Mammary epithelial cell (primary cell): ENCODE measurements at regions of chr10 and their contacts with region 1.

Region 1: DNA sequence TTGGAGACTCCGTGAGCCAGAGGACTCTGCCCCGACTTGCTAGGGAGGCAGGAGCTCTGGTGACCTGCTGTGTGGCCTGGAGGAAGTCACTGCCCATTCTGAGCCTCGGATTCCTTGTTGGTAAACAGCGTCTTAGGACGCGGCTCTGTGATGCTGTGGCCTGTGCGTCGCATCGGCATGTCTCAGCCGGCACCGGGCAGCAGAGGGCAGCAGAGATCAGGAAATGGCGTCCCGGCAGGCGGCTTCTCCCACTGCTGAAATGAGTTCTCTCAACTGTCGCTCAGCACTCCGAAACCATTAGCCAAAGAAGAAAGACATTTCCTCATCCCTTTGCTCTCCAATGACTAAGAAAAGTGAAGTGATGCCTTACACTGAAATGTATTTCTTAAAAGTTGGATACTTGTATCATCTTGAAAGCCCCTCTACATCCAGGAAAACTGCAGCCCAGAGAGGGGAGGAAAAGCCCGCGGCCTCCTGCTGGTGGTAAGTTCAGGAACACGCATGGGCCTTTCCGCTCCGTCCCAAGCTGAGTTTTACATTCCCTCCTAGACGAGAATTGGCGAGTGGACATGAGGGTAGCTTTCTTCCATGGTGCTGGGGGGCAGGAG is 91.7 kb downstream of the WDR11 start:
- DNase-seq: peak; percentile 67
- H3K4me3 ChIP-seq: no peak overlapping the region
- H3K27ac ChIP-seq: no peak overlapping the region
- H3K4me1 ChIP-seq: peaks cover 15% of the 10 kb centered on the region
- H3K27me3 ChIP-seq: no peaks in the 10 kb centered on the region
- CTCF ChIP-seq: peak; percentile 80 to 92

Region 2: DNA sequence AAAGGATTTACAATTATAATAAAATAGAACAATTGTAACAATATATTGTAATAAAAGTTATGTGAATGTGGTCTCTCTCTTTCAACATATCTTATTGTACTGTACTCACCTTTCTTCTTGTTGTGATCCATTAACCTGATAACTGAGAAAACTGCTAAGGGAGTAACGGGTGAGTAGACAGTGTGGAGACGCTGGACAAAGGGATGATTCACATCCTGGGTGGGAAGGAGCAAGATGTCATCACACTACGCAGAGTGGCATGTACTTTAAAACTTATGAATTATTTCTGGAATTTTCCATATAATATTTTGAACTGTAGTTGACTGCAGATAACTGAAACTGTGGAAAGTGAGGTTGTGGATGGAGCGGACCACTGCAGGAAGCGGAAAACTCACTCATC is 577.0 kb before region 1 on chr10:
- CTCF ChIA-PET with region 1: no interaction called
- dilution Hi-C with region 1: no loop called
- in situ Hi-C with region 1: no loop called
- intact Hi-C with region 1: no loop called
- DNase-seq: peak; percentile 77
- H3K4me3 ChIP-seq: no peak overlapping the region
- H3K27ac ChIP-seq: no peak overlapping the region
- H3K4me1 ChIP-seq: peaks cover 12% of the 10 kb centered on the region
- H3K27me3 ChIP-seq: no peaks in the 10 kb centered on the region
- CTCF ChIP-seq: no peak

Region 3: GRCh38 chr10:120873734-120874133 is 69.2 kb before region 1 on chr10:
- CTCF ChIA-PET with region 1: no interaction called
- dilution Hi-C with region 1: no loop called
- in situ Hi-C with region 1: no loop called
- intact Hi-C with region 1: no loop called
- DNase-seq: no peak
- H3K4me3 ChIP-seq: no peak overlapping the region
- H3K27ac ChIP-seq: no peak overlapping the region
- H3K4me1 ChIP-seq: no peaks in the 10 kb centered on the region
- H3K27me3 ChIP-seq: no peaks in the 10 kb centered on the region
- CTCF ChIP-seq: no peak

Region 4: GRCh38 chr10:120999868-121000267 is 57.0 kb after region 1 on chr10:
- CTCF ChIA-PET with region 1: no interaction called
- dilution Hi-C with region 1: no loop called
- in situ Hi-C with region 1: no loop called
- intact Hi-C with region 1: loop called (anchors 5 kb)
- DNase-seq: no peak
- H3K4me3 ChIP-seq: no peak overlapping the region
- H3K27ac ChIP-seq: no peak overlapping the region
- H3K4me1 ChIP-seq: peaks cover 7% of the 10 kb centered on the region
- H3K27me3 ChIP-seq: peaks cover 7% of the 10 kb centered on the region
- CTCF ChIP-seq: peak; percentile 12 to 22

Region 5: DNA sequence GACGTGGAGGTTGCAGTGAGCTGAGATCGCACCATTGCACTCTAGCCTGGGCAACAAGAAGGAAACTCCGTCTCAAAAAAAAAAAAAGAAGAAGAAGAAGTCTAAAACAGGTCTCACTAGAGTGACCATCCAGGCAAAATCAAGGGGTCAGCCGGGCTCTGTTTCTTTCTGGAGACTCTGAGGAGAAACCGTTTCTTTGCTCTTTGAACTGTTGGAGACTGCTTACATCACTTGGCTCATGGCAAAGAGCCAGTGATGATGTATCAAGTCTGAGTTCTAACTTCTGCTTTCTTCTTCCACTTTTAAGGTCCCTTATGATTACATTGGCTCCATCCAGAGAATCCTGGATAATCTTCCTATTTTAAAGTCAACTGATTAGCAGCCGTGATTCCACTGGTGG is 215.1 kb after region 1 on chr10:
- CTCF ChIA-PET with region 1: no interaction called
- dilution Hi-C with region 1: no loop called
- in situ Hi-C with region 1: no loop called
- intact Hi-C with region 1: loop called (anchors 2 kb)
- DNase-seq: peak; percentile 54
- H3K4me3 ChIP-seq: no peak overlapping the region
- H3K27ac ChIP-seq: peak overlapping the region; percentile 100
- H3K4me1 ChIP-seq: peaks cover 49% of the 10 kb centered on the region
- H3K27me3 ChIP-seq: no peaks in the 10 kb centered on the region
- CTCF ChIP-seq: no peak

Region 6: GRCh38 chr10:121459765-121460453 is 517.0 kb after region 1 on chr10:
- CTCF ChIA-PET with region 1: no interaction called
- dilution Hi-C with region 1: no loop called
- in situ Hi-C with region 1: no loop called
- intact Hi-C with region 1: loop called (anchors 10 kb)
- DNase-seq: peak; percentile 33
- H3K4me3 ChIP-seq: no peak overlapping the region
- H3K27ac ChIP-seq: peak overlapping the region; percentile 27
- H3K4me1 ChIP-seq: peaks cover 27% of the 10 kb centered on the region
- H3K27me3 ChIP-seq: no peaks in the 10 kb centered on the region
- CTCF ChIP-seq: no peak

Region 7: GRCh38 chr10:121662945-121663917 is 720.3 kb after region 1 on chr10:
- CTCF ChIA-PET with region 1: interaction called, 3 read pairs
- dilution Hi-C with region 1: no loop called
- in situ Hi-C with region 1: no loop called
- intact Hi-C with region 1: loop called (anchors 5 kb)
- DNase-seq: peak; percentile 14
- H3K4me3 ChIP-seq: no peak overlapping the region
- H3K27ac ChIP-seq: no peak overlapping the region
- H3K4me1 ChIP-seq: no peaks in the 10 kb centered on the region
- H3K27me3 ChIP-seq: no peaks in the 10 kb centered on the region
- CTCF ChIP-seq: peak; percentile 48

Region 8: GRCh38 chr10:121886997-121887622 is 944.2 kb after region 1 on chr10:
- CTCF ChIA-PET with region 1: no interaction called
- dilution Hi-C with region 1: loop called (anchors 25 kb)
- in situ Hi-C with region 1: loop called (anchors 5 to 25 kb)
- intact Hi-C with region 1: loop called (anchors 1 kb)
- DNase-seq: peak; percentile 51
- H3K4me3 ChIP-seq: no peak overlapping the region
- H3K27ac ChIP-seq: no peak overlapping the region
- H3K4me1 ChIP-seq: no peaks in the 10 kb centered on the region
- H3K27me3 ChIP-seq: no peaks in the 10 kb centered on the region
- CTCF ChIP-seq: peak; percentile 96 to 98